ENCODE measurements at regions of chr17 and their contacts with region 1.

Region 1: DNA sequence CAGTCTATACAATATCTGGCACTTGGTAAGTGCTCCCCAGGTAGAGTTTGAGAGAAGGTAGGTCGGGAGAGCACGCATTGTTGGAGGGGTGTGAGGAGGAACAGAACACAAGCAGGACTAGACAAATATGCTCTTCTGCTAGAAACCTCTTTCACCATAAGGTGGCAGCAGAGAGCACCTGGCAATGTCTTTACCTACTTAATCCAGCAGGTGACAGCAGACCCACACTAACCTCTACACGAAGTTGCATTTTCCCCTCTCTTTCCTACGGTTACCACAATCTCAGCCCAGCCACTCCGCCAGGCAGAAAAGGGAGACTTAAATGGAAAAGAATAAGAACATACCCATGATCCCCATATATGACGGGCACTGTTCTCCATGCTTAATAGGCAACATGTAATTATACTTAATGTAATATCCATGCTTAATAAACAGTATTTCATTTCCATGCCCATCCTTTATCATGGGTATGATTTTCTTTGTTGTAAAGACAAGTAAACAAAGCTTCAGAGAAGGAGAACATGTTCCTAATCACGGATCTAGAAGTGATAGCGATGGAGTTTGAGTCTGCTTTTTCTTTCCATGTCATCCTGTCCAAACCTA is 55.1 kb upstream of the CCL2 start:
- DNase-seq: peak; percentile 81
- ATAC-seq: peak; percentile 77
- H3K4me3 Mint-ChIP-seq: no peak overlapping the region
- H3K27ac Mint-ChIP-seq: no peak overlapping the region
- H3K4me1 Mint-ChIP-seq: peaks cover 27% of the 10 kb centered on the region
- H3K27me3 Mint-ChIP-seq: peaks cover 72% of the 10 kb centered on the region

Region 2: GRCh38 chr17:34370997-34371395 is 171.0 kb after region 1 on chr17:
- CTCF ChIA-PET with region 1: interaction called, 13 read pairs
- DNase-seq: no peak
- ATAC-seq: peak; percentile 66
- H3K4me3 Mint-ChIP-seq: no peak overlapping the region
- H3K27ac Mint-ChIP-seq: no peak overlapping the region
- H3K4me1 Mint-ChIP-seq: peaks cover 23% of the 10 kb centered on the region
- H3K27me3 Mint-ChIP-seq: peaks cover 12% of the 10 kb centered on the region